Activated B cell treated with CpG ODN at 0.5 μM for 24 hours (primary cell): ENCODE measurements at regions of chr3 and their contacts with region 1.

Region 1: DNA sequence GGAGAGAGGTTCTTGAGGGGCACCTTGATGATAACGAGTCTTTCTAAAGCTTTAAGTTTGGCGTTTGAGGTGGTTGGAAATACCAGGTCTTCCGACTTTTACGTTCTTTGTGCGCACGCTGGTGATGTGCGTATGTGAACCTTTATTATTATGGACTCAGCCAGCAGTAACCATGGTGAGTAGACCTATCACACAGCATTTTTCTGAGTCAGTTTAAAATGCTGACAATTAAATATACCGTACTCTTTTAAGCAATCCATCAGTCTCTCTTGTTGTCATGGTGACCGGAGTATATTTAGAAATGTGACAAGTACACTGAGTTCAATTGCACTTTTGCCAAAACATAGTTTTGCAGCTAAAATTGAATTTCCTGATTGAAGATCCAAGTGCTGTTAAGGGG is 172.2 kb downstream of the LPP start:
- DNase-seq: no peak
- ATAC-seq: no peak
- H3K4me3 Mint-ChIP-seq: no peak overlapping the region
- H3K27ac Mint-ChIP-seq: no peak overlapping the region
- H3K4me1 Mint-ChIP-seq: peaks cover 58% of the 10 kb centered on the region
- H3K27me3 Mint-ChIP-seq: no peaks in the 10 kb centered on the region
- CTCF ChIP-seq: no peak

Region 2: GRCh38 chr3:188339410-188340295 is 13.5 kb after region 1 on chr3:
- CTCF ChIA-PET with region 1: interaction called, 3 read pairs
- POLR2A ChIA-PET with region 1: interaction called, 5 read pairs
- intact Hi-C with region 1: loop called (anchors 2 kb)
- DNase-seq: no peak
- ATAC-seq: peak; percentile 87
- H3K4me3 Mint-ChIP-seq: peak overlapping the region; percentile 55
- H3K27ac Mint-ChIP-seq: peak overlapping the region; percentile 87
- H3K4me1 Mint-ChIP-seq: peaks cover 49% of the 10 kb centered on the region
- H3K27me3 Mint-ChIP-seq: no peaks in the 10 kb centered on the region
- CTCF ChIP-seq: no peak